Astrocyte of the cerebellum (primary cell): ENCODE measurements at regions of chr20 and their contacts with region 1.

Region 1: DNA sequence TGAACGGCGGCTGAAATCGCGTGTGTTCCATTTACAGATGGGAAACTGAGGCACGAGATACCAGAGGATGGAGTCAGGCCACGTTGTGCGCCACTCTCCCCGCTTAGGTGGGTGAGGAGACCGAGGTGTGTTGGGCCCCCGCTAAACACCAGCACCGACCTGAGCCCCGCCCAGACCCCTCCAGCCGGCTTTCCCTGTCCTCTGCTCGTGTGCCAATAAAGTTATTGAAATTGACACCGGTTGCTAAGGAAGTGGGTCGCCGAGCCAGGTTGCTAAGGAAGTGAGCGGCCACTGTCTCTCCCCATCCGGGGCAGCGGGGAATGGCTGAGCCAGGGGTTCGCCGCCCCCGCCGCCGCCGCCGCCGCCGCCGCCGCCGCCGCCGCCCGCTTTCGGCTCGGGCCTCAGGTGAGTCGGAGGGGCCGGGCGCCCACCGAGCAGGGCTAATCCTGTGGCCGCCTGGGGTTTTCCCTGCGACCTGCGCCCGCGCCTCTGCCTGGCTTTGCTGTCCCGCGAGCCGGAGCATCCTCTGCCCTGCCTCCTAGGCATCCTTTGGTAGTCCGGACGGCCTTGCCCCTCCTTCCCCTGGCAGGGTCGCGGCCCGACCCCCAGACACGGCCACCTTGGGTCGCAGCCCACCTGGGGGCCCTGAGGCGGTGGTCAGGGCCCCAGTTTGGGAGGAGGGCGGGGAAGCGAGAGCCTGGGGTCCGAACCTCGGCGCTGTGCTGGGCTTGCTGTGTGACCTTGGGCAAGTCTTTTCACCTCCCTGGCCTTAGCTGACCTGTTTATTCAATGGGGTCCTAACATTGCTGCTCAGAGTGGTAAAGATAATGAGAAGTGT is at the start of gene KIF3B:
- DNase-seq: peak; percentile 75
- H3K4me3 ChIP-seq: peak within 1 kb of the TSS; percentile 94
- CTCF ChIP-seq: no peak

Region 2: GRCh38 chr20:31956556-31957526 is 320.7 kb before region 1 on chr20:
- in situ Hi-C with region 1: no loop called
- DNase-seq: no peak
- H3K4me3 ChIP-seq: no peak overlapping the region
- CTCF ChIP-seq: no peak

Region 3: DNA sequence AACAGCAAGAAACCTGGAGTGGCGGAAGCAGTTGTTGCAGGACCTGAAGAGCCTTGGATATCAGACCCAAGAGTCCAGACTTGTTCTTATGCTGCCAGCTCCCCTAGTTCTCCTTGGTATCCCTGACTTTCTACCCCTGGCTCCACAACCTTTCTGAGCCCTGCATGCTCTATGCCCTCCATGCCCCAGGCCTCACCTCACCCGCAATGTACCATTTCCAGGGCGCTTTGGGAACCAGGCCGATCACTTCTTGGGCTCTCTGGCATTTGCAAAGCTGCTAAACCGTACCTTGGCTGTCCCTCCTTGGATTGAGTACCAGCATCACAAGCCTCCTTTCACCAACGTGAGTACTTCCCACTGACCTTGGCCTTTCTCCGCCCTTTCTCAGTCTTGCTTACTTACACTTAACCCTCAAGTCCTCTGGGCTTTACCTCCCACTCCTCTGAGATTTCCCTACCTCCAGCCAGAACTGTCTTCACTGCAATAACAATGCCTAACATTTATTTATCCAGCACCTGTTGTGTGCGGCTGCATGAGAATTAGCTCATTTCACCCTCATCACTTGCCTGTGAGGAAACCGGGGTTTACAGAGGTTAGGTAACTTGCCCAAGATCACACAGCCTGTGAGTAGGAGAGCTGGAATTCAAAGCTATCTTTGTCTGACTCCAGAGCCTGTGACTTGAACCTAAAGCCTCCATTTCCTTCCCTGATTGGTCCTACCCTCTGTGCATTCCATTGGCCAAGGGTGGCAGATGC is 67.6 kb before region 1 on chr20:
- in situ Hi-C with region 1: loop called (anchors 5 kb)
- DNase-seq: no peak
- H3K4me3 ChIP-seq: no peak overlapping the region
- CTCF ChIP-seq: no peak

Region 4: GRCh38 chr20:32316667-32317066 is 39.1 kb after region 1 on chr20:
- in situ Hi-C with region 1: loop called (anchors 5 kb)
- DNase-seq: no peak
- H3K4me3 ChIP-seq: no peak overlapping the region
- CTCF ChIP-seq: no peak

Region 5: GRCh38 chr20:32378461-32378860 is 100.9 kb after region 1 on chr20:
- in situ Hi-C with region 1: loop called (anchors 5 kb)
- DNase-seq: no peak
- H3K4me3 ChIP-seq: no peak overlapping the region
- CTCF ChIP-seq: no peak